ENCODE measurements at regions of chr11 and their contacts with region 1.

Region 1: DNA sequence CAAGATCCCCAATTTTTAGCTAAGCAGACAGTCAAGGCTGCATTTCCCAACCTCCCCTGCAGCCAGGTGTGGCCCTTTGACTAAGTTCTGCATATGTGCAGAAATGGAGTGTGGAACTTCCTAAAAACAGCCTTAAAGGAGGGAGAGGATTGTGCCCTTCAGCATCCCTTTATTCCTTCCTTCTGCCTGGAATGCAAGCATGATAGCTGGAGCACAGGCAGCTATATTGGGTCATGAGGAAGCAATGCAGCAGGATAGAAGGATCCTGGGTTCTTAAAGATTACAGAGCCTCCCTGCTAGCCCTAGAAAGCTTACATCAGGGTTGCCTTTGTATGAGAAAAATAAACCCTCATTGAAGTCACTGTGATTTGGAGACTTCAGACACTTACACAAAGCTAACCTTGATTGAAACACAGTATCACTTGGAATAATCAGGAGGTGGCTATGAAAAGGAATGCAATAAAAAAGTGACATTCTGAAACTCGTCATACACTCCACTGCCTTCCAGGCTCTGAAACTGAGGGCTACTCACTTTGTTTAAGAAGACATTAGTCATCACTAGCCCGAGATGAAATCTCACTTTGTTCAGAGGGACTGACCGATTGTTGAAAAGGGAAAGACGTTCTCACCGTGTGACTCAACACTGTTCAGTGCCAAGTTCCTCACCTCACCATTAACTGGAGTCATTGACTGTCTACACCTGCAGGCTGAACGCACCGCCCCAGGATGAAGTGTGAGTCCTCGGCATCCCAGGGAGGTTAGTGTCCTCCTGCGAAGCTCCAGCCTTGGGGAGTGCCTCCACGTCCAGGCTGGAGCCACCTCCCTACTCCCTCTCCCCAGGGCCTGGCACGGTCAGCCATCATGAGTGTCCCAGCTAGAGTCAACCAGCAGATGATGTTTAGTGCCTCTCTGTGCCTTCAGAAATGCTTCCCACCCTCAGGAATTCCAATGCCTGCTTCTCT is 30.2 kb downstream of the FADD start:
- DNase-seq: peak; percentile 98
- ATAC-seq: peak; percentile 96
- H3K4me3 ChIP-seq: peak overlapping the region in 1 of 2 experiments; percentile 12; a peak in 1 of 4 replicates
- H3K27ac ChIP-seq: peak overlapping the region; percentile 78
- H3K4me1 ChIP-seq: peaks cover 13% of the 10 kb centered on the region
- H3K27me3 ChIP-seq: no peaks in the 10 kb centered on the region
- CTCF ChIP-seq: no peak

Region 2: GRCh38 chr11:70048279-70049027 is 184.9 kb before region 1 on chr11:
- CTCF ChIA-PET with region 1: no interaction called
- POLR2A ChIA-PET with region 1: no interaction called
- in situ Hi-C with region 1: no loop called
- intact Hi-C with region 1: no loop called
- DNase-seq: no peak
- ATAC-seq: peak; percentile 85
- H3K4me3 ChIP-seq: no peak overlapping the region
- H3K27ac ChIP-seq: no peak overlapping the region
- H3K4me1 ChIP-seq: no peaks in the 10 kb centered on the region
- H3K27me3 ChIP-seq: peaks cover 36% of the 10 kb centered on the region
- CTCF ChIP-seq: peak; percentile 78

Region 3: DNA sequence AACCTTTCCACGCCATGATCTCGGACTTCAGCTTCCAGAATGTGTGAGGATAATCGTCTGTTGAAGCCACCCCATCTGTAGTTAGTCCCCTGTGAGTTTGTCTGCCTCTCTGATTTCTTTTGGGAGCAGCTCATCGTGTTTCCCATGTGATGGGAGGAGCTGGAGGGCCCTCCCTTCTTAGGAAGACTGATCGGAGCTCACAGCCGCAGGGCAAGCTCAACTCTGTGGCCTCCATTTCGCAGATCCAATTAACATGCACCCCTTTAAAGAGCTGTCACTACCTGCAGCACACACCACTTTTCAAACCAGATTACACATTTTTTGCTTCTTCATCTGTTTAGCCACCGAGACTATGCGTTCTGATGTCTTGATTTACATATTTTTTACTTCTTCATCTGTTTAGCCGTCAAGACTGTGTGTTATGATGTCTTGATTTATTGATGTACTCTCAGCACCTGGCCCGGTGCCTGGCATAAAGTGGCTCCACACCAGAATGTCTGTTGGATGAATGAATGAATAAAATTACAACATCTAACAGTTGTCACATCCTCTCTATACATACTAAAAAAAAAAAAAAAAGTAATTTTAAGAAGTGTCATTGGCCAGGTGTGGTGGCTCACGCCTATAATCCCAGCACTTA is 22.3 kb after region 1 on chr11:
- CTCF ChIA-PET with region 1: interaction called, 10 read pairs
- POLR2A ChIA-PET with region 1: no interaction called
- in situ Hi-C with region 1: no loop called
- intact Hi-C with region 1: no loop called
- DNase-seq: no peak
- ATAC-seq: no peak
- H3K4me3 ChIP-seq: no peak overlapping the region
- H3K27ac ChIP-seq: no peak overlapping the region
- H3K4me1 ChIP-seq: no peaks in the 10 kb centered on the region
- H3K27me3 ChIP-seq: no peaks in the 10 kb centered on the region
- CTCF ChIP-seq: no peak